Breast epithelium (tissue), 4 donors: ENCODE measurements at regions of chr5 and their contacts with region 1.

Region 1: DNA sequence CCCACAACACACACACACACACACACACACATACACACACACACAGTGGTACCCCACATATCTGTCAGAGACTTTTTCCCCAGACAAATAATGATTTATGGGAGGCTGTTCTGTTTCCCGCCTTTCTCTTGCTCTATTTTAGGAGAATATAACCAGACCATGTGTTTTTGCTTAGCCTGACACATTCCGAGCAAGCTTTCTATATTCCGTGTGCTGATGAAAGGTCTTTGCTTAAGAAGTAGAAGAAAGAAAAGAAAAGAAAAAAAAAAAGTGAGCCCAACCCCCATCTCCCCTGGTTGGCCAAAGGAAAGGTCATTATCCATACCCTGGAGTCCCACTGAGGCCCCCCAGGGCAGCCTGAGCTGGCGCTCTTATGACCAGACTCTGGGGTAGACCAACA is 338.6 kb downstream of the SLIT3 start:
- DNase-seq: no peak
- H3K4me3 ChIP-seq: no peak overlapping the region
- H3K27ac ChIP-seq: peak overlapping the region in 1 of 2 donors; percentile 55
- H3K4me1 ChIP-seq: no peaks in the 10 kb centered on the region
- H3K27me3 ChIP-seq: no peaks in the 10 kb centered on the region
- CTCF ChIP-seq: no peak
- POLR2A ChIP-seq: no peak

Region 2: DNA sequence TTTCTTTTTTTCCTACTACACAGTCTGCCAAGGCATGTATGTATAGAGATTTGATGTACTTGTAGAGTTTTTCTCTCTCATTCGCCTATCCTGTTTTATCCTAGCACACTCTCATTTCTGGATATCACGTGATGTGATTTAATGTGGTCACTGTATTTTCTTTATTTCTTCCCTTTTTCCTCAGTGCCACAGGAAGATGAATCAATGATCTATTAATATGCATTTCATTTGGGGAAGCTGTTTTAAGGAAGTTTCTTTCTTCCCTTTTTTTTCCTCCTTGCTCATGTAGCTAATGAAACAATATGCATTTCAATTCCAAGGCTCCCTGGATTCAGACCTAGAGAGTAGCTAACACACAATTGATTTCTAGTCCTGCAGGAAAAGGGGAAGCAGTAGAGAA is 1177.2 kb before region 1 on chr5:
- intact Hi-C with region 1: loop called (anchors 5 kb)
- DNase-seq: no peak
- H3K4me3 ChIP-seq: no peak overlapping the region
- H3K27ac ChIP-seq: no peak overlapping the region
- H3K4me1 ChIP-seq: no peaks in the 10 kb centered on the region
- H3K27me3 ChIP-seq: no peaks in the 10 kb centered on the region
- CTCF ChIP-seq: no peak
- POLR2A ChIP-seq: no peak

Region 3: GRCh38 chr5:168947212-168947868 is 15.0 kb before region 1 on chr5:
- intact Hi-C with region 1: no loop called
- DNase-seq: no peak
- H3K4me3 ChIP-seq: no peak overlapping the region
- H3K27ac ChIP-seq: no peak overlapping the region
- H3K4me1 ChIP-seq: no peaks in the 10 kb centered on the region
- H3K27me3 ChIP-seq: no peaks in the 10 kb centered on the region
- CTCF ChIP-seq: peak in 2 of 3 donors; percentile 20 to 43
- POLR2A ChIP-seq: no peak